OCI-LY7 (cell line): ENCODE measurements at regions of chr5 and their contacts with region 1.

Region 1: DNA sequence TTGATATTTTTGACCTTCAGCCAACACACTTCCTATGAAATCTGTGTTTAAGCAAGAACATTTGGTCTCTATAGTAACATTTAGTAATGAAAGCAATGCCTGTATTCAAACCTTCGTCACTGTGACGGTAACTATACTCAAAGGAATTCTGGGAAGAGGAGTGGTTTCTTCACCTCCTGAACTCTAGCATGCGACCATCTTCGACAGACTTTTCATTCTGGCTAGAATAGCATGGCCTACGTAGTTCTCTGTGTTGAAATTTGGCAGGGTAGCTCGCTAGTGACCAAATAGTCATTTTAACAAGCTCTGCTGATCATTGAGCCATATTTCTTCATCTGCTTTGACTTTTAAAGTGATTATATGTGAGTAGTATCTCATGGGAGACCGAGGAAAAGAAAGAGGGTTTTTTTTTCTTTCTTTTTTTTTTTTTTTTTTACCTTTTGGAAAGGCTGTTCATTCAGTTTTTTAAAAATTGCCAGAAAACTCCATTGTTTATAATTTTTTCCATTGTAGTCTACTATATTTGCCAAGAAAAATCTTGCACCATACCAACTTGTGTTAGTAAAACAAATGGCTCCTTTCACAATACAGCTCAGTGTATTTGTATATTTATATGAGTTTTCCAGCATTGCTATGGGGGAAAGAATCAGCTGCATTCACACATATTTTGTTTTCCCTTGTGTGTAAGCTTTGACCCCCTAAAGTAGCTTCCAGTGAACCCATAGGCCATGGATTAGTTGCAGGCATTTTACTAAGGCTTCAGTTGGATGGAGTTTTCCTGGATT is 166.8 kb downstream of the NNT start:
- DNase-seq: no peak
- H3K4me3 ChIP-seq: no peak overlapping the region
- H3K27ac ChIP-seq: no peak overlapping the region
- H3K4me1 ChIP-seq: no peaks in the 10 kb centered on the region
- CTCF ChIP-seq: no peak

Region 2: GRCh38 chr5:43917925-43918324 is 148.2 kb after region 1 on chr5:
- CTCF ChIA-PET with region 1: no interaction called
- POLR2A ChIA-PET with region 1: interaction called, 12 read pairs
- intact Hi-C with region 1: no loop called
- DNase-seq: no peak
- H3K4me3 ChIP-seq: no peak overlapping the region
- H3K27ac ChIP-seq: no peak overlapping the region
- H3K4me1 ChIP-seq: no peaks in the 10 kb centered on the region
- CTCF ChIP-seq: no peak